Aorta (tissue), 5 donors: ENCODE measurements at regions of chr14 and their contacts with region 1.

Region 1: DNA sequence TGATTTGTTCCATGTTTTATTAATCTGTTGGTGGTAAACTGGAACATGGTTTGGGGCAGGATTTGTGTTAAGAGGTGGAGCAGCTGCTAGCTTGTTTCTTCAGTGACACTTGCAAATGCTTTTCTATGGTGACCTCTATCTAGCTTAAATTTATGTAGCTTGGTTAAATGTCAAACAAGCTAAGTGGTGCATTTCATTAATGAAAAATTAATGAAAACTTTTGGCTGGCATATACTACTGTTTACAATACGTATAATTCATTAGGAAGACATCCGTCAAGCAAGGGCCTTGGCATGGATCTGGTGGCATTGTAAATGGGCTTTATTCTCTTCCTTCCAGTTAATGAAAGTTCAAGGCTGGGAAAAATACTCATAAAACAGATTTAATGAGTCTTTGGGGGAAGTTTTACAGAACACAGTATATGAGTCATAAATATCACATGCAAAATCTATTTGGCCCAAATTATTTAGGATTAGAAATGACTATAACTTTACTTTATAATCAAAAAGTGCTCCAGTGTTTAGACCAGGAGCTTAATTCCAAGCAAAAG is 807.7 kb upstream of the SEL1L start:
- DNase-seq: no peak
- ATAC-seq: no peak
- H3K4me3 ChIP-seq: no peak overlapping the region
- H3K27ac ChIP-seq: no peak overlapping the region
- H3K4me1 ChIP-seq: no peaks in the 10 kb centered on the region
- H3K27me3 ChIP-seq: no peaks in the 10 kb centered on the region

Region 2: DNA sequence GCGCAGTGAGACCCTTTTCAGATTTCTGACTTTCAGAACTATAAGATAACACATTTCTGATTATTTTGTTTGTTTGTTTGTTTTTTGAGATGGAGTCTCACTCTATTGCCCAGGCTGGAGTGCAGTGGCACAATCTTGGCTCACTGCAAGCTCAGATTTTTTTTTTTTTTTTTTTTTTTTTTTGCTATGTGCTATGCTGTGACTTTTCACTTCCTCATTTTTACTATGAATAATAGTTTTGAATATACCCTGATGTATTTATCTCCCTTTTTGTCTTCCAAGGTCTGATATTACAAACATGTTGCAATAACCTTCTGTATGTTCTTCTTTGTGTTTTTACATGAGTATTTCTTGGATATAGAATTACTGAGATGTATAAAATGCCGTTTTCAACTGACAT is 148.9 kb before region 1 on chr14:
- intact Hi-C with region 1: no loop called
- DNase-seq: no peak
- ATAC-seq: no peak
- H3K4me3 ChIP-seq: no peak overlapping the region
- H3K27ac ChIP-seq: no peak overlapping the region
- H3K4me1 ChIP-seq: no peaks in the 10 kb centered on the region
- H3K27me3 ChIP-seq: no peaks in the 10 kb centered on the region

Region 3: GRCh38 chr14:82362452-82362851 is 21.1 kb after region 1 on chr14:
- intact Hi-C with region 1: loop called in 1 of 2 experiments (anchors 2 kb)
- DNase-seq: no peak
- ATAC-seq: peak; percentile 76
- H3K4me3 ChIP-seq: no peak overlapping the region
- H3K27ac ChIP-seq: no peak overlapping the region
- H3K4me1 ChIP-seq: no peaks in the 10 kb centered on the region
- H3K27me3 ChIP-seq: peaks cover 0 to 2% of the 10 kb centered on the region in 2 donors